ENCODE measurements at regions of chr1 and their contacts with region 1.

Region 1: GRCh38 chr1:47313915-47314664 is at the start of gene STIL:
- DNase-seq: peak; percentile 98
- H3K4me3 Mint-ChIP-seq: peak within 1 kb of the TSS; percentile 92
- H3K27ac Mint-ChIP-seq: peak within 1 kb of the TSS; percentile 94
- H3K4me1 Mint-ChIP-seq: peaks cover 8% of the 10 kb centered on the region
- H3K27me3 Mint-ChIP-seq: no peaks in the 10 kb centered on the region
- CTCF ChIP-seq: no peak
- total RNA-seq, gene STIL: 52.5 and 62.4 TPM in 2 replicates

Region 2: DNA sequence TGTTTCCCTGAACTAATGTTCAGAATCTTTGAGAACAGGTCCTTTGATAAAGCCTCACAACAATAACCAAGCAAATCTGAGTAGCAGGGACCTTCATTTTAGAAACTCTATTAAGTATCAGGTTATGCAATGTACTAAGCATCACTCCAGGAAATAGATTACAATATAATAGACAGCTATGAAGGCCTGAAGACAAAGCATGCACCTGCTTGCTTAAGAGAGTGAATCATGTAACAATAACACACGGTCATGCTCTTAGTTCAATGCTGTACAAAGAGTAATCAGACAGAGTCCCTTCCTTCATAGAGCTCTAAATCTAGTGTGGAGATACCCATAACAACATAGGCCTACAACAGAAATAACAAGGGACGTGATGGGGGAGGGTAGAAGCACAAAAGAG is 11.4 kb after region 1 on chr1:
- CTCF ChIA-PET with region 1: interaction called, 10 read pairs
- intact Hi-C with region 1: loop called (anchors 1 kb)
- DNase-seq: peak; percentile 39
- H3K4me3 Mint-ChIP-seq: no peak overlapping the region
- H3K27ac Mint-ChIP-seq: peak overlapping the region; percentile 94
- H3K4me1 Mint-ChIP-seq: peaks cover 16% of the 10 kb centered on the region
- H3K27me3 Mint-ChIP-seq: no peaks in the 10 kb centered on the region
- CTCF ChIP-seq: no peak

Region 3: GRCh38 chr1:47348246-47348645 is 34.2 kb after region 1 on chr1:
- CTCF ChIA-PET with region 1: no interaction called
- intact Hi-C with region 1: loop called (anchors 5 kb)
- DNase-seq: no peak
- H3K4me3 Mint-ChIP-seq: no peak overlapping the region
- H3K27ac Mint-ChIP-seq: no peak overlapping the region
- H3K4me1 Mint-ChIP-seq: peaks cover 14% of the 10 kb centered on the region
- H3K27me3 Mint-ChIP-seq: no peaks in the 10 kb centered on the region
- CTCF ChIP-seq: no peak

Region 4: DNA sequence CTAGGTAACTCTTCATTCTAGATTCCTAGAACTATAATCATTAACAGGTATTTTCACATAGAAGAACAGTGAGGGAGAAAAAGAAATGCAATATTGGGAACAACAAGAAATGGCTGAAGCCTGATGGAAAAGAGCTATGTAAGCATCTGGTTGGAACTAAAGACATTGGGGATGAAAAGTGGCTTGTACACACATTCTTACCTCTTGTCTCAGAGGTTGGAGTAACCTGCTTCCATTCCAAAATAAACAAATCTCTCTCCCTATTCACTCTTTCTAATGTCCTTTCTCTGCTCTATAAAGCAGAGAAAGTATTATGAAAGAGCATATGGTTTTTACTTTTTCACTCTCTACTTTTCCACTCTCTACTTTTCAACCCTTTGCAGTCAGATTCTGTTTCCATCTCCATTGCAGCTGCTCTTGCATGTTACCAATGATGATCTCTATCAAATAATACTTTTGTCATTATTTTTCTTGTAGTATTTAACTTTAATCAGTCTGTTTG is 57.0 kb after region 1 on chr1:
- CTCF ChIA-PET with region 1: no interaction called
- intact Hi-C with region 1: no loop called
- DNase-seq: no peak
- H3K4me3 Mint-ChIP-seq: no peak overlapping the region
- H3K27ac Mint-ChIP-seq: no peak overlapping the region
- H3K4me1 Mint-ChIP-seq: no peaks in the 10 kb centered on the region
- H3K27me3 Mint-ChIP-seq: no peaks in the 10 kb centered on the region
- CTCF ChIP-seq: no peak

Measured in Calu3 (cell line).